Left lung (tissue), 14 donors: ENCODE measurements at regions of chr17 and their contacts with region 1.

Region 1: GRCh38 chr17:63434876-63435684 is 11.0 kb downstream of the CYB561 start:
- DNase-seq: peak in 3 of 4 donors; percentile 76 to 92 (median 90)
- ATAC-seq: peak; percentile 71
- H3K4me3 ChIP-seq: no peak overlapping the region
- H3K27ac ChIP-seq: peak overlapping the region; percentile 56 to 68
- H3K4me1 ChIP-seq: peaks cover 42 to 80% of the 10 kb centered on the region in 2 donors
- H3K27me3 ChIP-seq: no peaks in the 10 kb centered on the region
- CTCF ChIP-seq: no peak

Region 2: GRCh38 chr17:63478791-63479494 is 43.9 kb after region 1 on chr17:
- intact Hi-C with region 1: loop called in 1 of 2 experiments (anchors 5 kb)
- DNase-seq: peak in 3 of 4 donors; percentile 78 to 89 (median 84)
- ATAC-seq: peak; percentile 92
- H3K4me3 ChIP-seq: peak overlapping the region in 1 of 2 donors; percentile 52
- H3K27ac ChIP-seq: peak overlapping the region; percentile 20 to 53
- H3K4me1 ChIP-seq: peaks cover 15 to 60% of the 10 kb centered on the region in 2 donors
- H3K27me3 ChIP-seq: peaks cover 5 to 48% of the 10 kb centered on the region in 2 donors
- CTCF ChIP-seq: peak; percentile 74 to 83

Region 3: GRCh38 chr17:63497708-63498483 is 62.8 kb after region 1 on chr17:
- intact Hi-C with region 1: no loop called
- DNase-seq: no peak
- ATAC-seq: no peak
- H3K4me3 ChIP-seq: no peak overlapping the region
- H3K27ac ChIP-seq: peak overlapping the region; percentile 48 to 56
- H3K4me1 ChIP-seq: peaks cover 0 to 9% of the 10 kb centered on the region in 2 donors
- H3K27me3 ChIP-seq: no peaks in the 10 kb centered on the region
- CTCF ChIP-seq: no peak